MCF 10A (cell line): ENCODE measurements at regions of chr1 and their contacts with region 1.

Region 1: GRCh38 chr1:91864017-91864700 is 21.8 kb downstream of the TGFBR3 start:
- DNase-seq: peak; percentile 90
- H3K4me3 Mint-ChIP-seq: peak overlapping the region; percentile 48
- H3K27ac Mint-ChIP-seq: peak overlapping the region; percentile 32
- H3K4me1 Mint-ChIP-seq: peaks cover 13% of the 10 kb centered on the region
- H3K27me3 Mint-ChIP-seq: no peaks in the 10 kb centered on the region
- CTCF ChIP-seq: no peak

Region 2: GRCh38 chr1:91851130-91852010 is 12.8 kb before region 1 on chr1:
- CTCF ChIA-PET with region 1: interaction called, 6 read pairs
- POLR2A ChIA-PET with region 1: interaction called, 62 read pairs
- intact Hi-C with region 1: loop called (anchors 2 kb)
- DNase-seq: peak; percentile 91
- H3K4me3 Mint-ChIP-seq: peak overlapping the region; percentile 47
- H3K27ac Mint-ChIP-seq: peak overlapping the region; percentile 76
- H3K4me1 Mint-ChIP-seq: peaks cover 12% of the 10 kb centered on the region
- H3K27me3 Mint-ChIP-seq: no peaks in the 10 kb centered on the region
- CTCF ChIP-seq: no peak

Region 3: DNA sequence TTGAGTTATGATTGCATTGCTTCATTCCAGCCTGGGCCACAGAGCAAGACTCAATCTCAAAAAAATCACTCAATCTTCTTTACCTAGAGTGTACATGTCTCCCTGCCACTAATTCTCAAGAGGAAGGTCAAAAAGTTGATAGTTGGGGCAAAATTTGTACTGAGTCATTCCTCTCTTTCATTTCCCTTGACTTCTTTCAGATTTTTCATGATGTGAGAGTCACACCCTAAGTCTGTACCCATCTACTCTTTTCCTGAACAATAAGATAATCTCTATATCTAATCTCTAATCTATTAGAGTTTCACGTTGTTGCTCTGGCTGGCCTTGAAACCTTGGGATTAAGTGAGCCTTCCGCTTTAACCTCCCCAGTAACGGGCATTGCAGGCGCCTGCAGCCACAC is 83.9 kb after region 1 on chr1:
- CTCF ChIA-PET with region 1: no interaction called
- POLR2A ChIA-PET with region 1: no interaction called
- intact Hi-C with region 1: no loop called
- DNase-seq: no peak
- H3K4me3 Mint-ChIP-seq: no peak overlapping the region
- H3K27ac Mint-ChIP-seq: no peak overlapping the region
- H3K4me1 Mint-ChIP-seq: no peaks in the 10 kb centered on the region
- H3K27me3 Mint-ChIP-seq: no peaks in the 10 kb centered on the region
- CTCF ChIP-seq: no peak